Activated CD4-positive, alpha-beta T cell treated with anti-CD3 and anti-CD28 coated beads for 36 hours (primary cell): ENCODE measurements at regions of chr3 and their contacts with region 1.

Region 1: DNA sequence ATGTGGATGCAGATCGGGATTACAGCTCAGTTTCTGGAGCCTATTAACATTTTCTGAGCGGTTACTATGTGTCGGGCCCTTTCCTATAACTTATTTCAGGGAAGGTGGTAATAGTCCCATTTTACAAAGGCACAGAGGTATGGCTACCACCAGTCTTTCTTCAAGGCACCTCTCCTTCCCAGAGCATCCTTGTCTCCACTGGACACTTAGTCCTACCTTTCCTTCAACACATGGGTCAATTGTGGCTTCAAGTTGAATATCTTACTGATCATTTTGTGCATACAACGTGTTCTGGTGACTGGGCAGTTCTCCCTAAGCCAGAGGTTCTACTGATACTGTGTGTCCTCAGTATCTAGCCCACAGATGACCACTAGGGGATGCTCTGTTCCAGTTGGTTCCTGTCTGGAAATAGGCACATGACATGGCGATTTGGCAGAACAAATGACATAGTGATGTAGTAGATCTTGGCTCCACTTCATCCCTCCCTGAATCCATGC is 60.7 kb upstream of the CMTM8 start:
- DNase-seq: peak; percentile 75
- ATAC-seq: peak; percentile 87
- H3K4me3 Mint-ChIP-seq: no peak overlapping the region
- H3K27ac Mint-ChIP-seq: peak overlapping the region; percentile 44
- H3K4me1 Mint-ChIP-seq: peaks cover 8% of the 10 kb centered on the region
- H3K27me3 Mint-ChIP-seq: no peaks in the 10 kb centered on the region

Region 2: DNA sequence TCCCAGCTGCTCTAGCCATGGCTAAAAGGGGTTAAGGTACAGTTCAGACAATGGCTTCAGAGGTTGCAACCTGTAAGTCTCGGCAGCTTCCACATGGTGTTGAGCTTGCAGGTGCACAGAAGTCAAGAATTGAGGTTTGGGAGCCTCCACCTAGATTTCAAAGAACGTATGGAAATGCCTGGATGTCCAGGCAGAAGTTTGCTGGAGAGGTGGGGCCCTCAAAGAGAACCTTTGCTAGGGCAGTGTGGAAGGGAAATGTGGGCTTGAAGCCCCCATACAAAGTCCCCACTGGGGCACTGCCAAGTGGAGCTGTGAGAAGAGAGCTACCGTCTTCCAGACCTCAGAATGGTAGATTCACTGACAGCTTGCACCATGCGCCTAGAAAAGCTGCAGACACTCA is 571.3 kb before region 1 on chr3:
- CTCF ChIA-PET with region 1: no interaction called
- POLR2A ChIA-PET with region 1: no interaction called
- intact Hi-C with region 1: no loop called
- DNase-seq: no peak
- ATAC-seq: no peak
- H3K4me3 Mint-ChIP-seq: no peak overlapping the region
- H3K27ac Mint-ChIP-seq: no peak overlapping the region
- H3K4me1 Mint-ChIP-seq: peaks cover 34% of the 10 kb centered on the region
- H3K27me3 Mint-ChIP-seq: no peaks in the 10 kb centered on the region

Region 3: GRCh38 chr3:31892916-31893573 is 284.7 kb before region 1 on chr3:
- CTCF ChIA-PET with region 1: no interaction called
- POLR2A ChIA-PET with region 1: no interaction called
- intact Hi-C with region 1: no loop called
- DNase-seq: no peak
- ATAC-seq: no peak
- H3K4me3 Mint-ChIP-seq: no peak overlapping the region
- H3K27ac Mint-ChIP-seq: no peak overlapping the region
- H3K4me1 Mint-ChIP-seq: peaks cover 13% of the 10 kb centered on the region
- H3K27me3 Mint-ChIP-seq: peaks cover 10% of the 10 kb centered on the region

Region 4: DNA sequence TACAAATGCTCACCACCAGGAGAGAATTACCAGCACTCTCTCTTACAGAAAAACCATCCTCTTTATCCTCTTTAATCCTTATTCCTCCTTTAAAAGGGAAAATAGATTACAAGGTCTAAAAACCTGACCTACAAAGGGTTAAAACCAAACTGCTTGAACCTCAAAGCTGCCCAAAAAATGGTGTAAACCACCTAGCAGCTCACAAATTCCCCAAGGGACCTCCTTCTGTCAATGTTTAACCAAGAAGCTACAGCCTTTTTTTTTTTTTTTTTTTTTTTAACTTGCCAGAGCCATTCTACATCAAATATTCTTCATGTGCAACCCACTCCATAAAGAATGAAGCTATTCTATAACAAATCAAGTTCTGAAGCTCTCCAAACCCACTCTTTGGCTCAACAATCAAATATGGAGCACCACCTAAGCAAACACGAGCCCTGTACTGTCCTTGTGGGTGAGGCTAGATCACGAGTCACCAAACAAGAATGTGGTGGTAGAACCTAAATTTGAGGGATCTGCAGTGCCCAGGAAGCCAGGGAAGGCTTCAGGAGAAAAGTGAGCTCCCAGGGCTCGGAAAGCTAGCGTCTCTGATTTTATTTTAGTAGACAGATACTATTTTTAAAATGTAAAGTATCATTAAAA is 216.8 kb before region 1 on chr3:
- CTCF ChIA-PET with region 1: no interaction called
- POLR2A ChIA-PET with region 1: no interaction called
- intact Hi-C with region 1: no loop called
- DNase-seq: no peak
- ATAC-seq: no peak
- H3K4me3 Mint-ChIP-seq: no peak overlapping the region
- H3K27ac Mint-ChIP-seq: no peak overlapping the region
- H3K4me1 Mint-ChIP-seq: peaks cover 11% of the 10 kb centered on the region
- H3K27me3 Mint-ChIP-seq: no peaks in the 10 kb centered on the region

Region 5: GRCh38 chr3:32288819-32289218 is 111.1 kb after region 1 on chr3:
- CTCF ChIA-PET with region 1: interaction called, 17 read pairs
- POLR2A ChIA-PET with region 1: no interaction called
- intact Hi-C with region 1: loop called in 1 of 2 experiments (anchors 2 kb)
- DNase-seq: no peak
- ATAC-seq: peak; percentile 89
- H3K4me3 Mint-ChIP-seq: peak overlapping the region; percentile 15
- H3K27ac Mint-ChIP-seq: peak overlapping the region; percentile 61
- H3K4me1 Mint-ChIP-seq: peaks cover 35% of the 10 kb centered on the region
- H3K27me3 Mint-ChIP-seq: no peaks in the 10 kb centered on the region

Region 6: DNA sequence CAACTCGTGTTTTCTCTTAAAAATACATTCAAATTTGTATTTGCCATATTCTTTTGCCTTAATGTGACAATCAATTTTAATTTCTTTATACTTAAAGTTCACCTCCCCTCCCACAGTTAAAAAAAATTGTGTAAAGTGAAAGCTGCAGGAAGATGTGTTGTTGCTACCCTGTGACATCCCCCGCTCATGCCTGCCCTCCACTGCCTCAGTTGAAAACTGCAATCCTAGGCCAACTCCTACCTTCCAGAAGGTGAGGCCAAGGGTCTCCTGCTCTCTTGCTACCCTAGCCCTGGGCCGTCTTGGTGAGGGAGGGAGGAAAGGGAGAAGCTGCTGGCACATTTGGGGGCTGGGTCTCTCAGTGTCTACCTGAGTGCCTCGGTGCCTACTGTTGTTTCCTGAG is 156.9 kb after region 1 on chr3:
- CTCF ChIA-PET with region 1: interaction called, 30 read pairs
- POLR2A ChIA-PET with region 1: no interaction called
- intact Hi-C with region 1: loop called in 1 of 2 experiments (anchors 1 kb)
- DNase-seq: peak; percentile 80
- ATAC-seq: peak; percentile 91
- H3K4me3 Mint-ChIP-seq: no peak overlapping the region
- H3K27ac Mint-ChIP-seq: peak overlapping the region; percentile 48
- H3K4me1 Mint-ChIP-seq: peaks cover 52% of the 10 kb centered on the region
- H3K27me3 Mint-ChIP-seq: no peaks in the 10 kb centered on the region

Region 7: GRCh38 chr3:32347343-32348125 is 169.8 kb after region 1 on chr3:
- CTCF ChIA-PET with region 1: interaction called, 31 read pairs
- POLR2A ChIA-PET with region 1: no interaction called
- intact Hi-C with region 1: no loop called
- DNase-seq: no peak
- ATAC-seq: peak; percentile 63
- H3K4me3 Mint-ChIP-seq: no peak overlapping the region
- H3K27ac Mint-ChIP-seq: peak overlapping the region; percentile 23
- H3K4me1 Mint-ChIP-seq: peaks cover 18% of the 10 kb centered on the region
- H3K27me3 Mint-ChIP-seq: no peaks in the 10 kb centered on the region

Region 8: DNA sequence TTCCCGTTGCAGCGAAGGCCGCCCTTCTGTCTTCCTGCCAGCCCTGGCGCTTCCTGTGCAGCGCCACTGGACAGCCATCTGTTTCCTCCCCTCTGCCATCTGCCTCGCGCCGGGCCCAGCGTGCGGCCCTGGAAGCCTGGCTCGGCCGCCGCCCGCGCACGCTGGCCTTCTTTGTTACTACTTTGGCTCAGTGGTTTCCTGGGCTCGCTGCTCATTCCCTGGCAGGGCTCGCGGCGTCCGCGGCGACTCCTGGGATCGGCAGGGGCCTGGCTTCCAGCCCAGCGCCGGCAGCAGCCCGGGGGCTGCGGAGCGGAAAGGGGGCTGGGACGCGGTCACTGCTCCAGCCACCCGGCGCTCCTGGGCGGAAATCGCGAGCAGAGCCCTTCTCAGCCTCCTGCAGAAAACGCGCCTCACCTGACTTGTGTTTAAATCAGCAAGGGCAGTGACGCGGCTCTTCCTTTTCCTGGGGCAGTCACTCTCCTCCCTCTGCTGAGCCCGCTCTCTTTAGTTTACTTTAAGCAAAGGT is 223.9 kb after region 1 on chr3:
- CTCF ChIA-PET with region 1: interaction called, 4 read pairs
- POLR2A ChIA-PET with region 1: no interaction called
- intact Hi-C with region 1: loop called (anchors 1 to 2 kb)
- DNase-seq: peak; percentile 79
- ATAC-seq: peak; percentile 78
- H3K4me3 Mint-ChIP-seq: peak overlapping the region; percentile 90
- H3K27ac Mint-ChIP-seq: peak overlapping the region; percentile 100
- H3K4me1 Mint-ChIP-seq: peaks cover 71% of the 10 kb centered on the region
- H3K27me3 Mint-ChIP-seq: no peaks in the 10 kb centered on the region

Region 9: DNA sequence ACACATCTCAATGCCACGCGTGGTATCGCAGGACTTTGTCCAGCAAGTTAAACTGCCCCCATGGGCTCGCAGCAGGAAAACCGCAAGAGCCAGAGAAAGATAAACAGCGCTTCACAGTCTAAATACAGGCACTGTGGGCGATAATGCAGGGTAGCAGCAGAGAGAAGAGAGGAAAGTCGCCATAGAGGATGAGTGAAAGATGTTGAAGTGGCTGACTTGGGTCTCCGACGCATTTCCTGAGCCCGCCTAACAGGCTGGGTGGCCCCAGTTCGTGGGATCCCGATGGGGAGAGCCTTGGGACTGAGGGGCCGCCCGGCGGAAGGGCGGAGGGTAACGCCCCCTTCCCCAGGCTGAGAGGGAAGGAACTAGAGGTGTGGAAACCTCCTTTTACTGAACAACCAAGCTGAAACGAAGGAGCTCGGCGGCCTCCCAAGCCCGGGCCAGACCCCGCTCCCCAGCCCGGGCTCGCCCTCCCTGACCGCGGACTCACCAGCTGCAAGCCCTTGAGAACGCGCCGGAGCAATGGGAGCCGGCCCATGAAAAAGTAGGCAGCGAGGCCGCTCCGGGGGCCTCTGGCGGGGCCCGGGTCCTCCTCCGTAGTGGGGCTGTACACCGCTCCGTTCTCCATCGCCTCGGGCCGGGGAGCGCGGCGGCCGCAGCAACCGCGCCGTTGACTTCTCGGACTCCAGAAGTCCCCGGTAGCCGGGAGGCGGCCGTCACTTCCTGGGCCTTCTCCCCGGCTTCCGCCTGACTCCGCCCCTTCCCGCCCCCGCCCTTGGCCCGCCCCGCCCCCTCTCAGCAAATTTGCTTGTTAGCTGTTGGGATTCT is 324.6 kb after region 1 on chr3 and contains the start of gene CMTM6:
- CTCF ChIA-PET with region 1: interaction called, 3 read pairs
- POLR2A ChIA-PET with region 1: no interaction called
- intact Hi-C with region 1: loop called in 1 of 2 experiments (anchors 2 kb)
- DNase-seq: peak; percentile 87
- ATAC-seq: peak; percentile 80
- H3K4me3 Mint-ChIP-seq: peak within 1 kb of the TSS; percentile 86
- H3K27ac Mint-ChIP-seq: peak within 1 kb of the TSS; percentile 95
- H3K4me1 Mint-ChIP-seq: peaks cover 29% of the 10 kb centered on the region
- H3K27me3 Mint-ChIP-seq: no peaks in the 10 kb centered on the region
- total RNA-seq, gene CMTM6: 33.6 to 48.0 TPM

Region 10: GRCh38 chr3:32593903-32594525 is 416.3 kb after region 1 on chr3:
- CTCF ChIA-PET with region 1: no interaction called
- POLR2A ChIA-PET with region 1: no interaction called
- intact Hi-C with region 1: no loop called
- DNase-seq: no peak
- ATAC-seq: no peak
- H3K4me3 Mint-ChIP-seq: no peak overlapping the region
- H3K27ac Mint-ChIP-seq: no peak overlapping the region
- H3K4me1 Mint-ChIP-seq: no peaks in the 10 kb centered on the region
- H3K27me3 Mint-ChIP-seq: peaks cover 2% of the 10 kb centered on the region